ENCODE measurements at regions of chr2 and their contacts with region 1.

Region 1: DNA sequence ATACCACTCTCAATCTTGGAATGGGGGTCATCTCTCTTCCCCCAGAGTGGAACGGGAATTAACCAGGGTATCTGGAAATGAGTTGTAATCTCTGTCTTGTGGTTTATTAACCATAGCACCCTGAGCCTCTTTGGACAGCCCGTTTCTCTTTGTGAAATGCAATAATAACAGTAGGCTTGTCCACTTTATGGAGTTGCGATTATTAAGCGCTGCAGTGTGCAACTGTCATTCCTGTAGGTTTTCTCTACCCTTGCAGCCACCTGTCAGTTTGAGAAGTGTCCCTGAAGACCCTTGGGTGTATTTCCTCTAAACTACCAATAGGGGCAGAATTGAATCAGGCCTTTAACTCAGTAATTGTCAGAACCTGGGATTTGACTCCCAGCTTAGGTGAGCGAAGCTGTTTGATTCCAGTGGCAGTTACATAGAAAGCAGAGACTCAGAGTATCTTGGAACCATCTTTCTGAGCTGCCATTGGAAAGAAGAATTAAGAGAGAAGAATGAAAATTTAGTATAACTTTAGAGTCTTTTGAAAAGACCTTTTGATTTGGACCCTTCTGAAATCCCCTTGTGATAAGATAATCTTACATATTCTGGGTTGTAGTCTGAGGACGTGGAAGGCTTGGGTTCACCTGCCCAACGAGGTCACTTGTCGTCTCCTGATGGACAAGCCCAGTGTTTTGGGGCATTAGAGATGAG is 2.5 kb downstream of the HK2 start:
- DNase-seq: no peak
- H3K4me3 ChIP-seq: no peak overlapping the region
- CTCF ChIP-seq: no peak
- POLR2A ChIP-seq: no peak

Region 2: DNA sequence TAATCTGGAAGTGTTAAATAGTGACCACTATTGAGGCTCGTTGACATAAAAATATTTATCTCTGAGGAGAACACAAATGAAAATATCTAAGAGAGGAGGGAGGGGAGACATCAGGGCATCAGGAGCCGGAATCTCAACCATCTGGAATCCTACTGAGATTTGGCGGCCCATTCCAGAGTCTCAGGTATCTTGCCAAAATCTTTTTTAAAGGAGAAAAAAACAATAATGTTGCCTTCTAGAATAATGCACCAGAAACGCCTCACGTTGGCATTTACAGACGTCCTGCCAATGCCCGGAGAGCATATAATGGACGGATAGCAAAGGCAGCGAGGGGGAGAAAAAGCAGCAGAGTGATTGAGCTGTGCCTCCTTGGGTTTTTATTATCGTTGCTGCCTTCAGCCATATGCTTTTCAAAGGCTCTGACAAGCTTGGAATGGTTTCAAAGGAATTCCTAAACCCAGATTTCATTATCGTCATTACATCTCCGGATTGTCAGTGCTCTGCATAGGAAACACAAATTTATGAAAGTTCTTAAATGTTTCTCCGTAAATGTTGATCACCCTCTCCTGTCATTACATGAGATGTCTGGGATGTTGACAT is 1512.2 kb before region 1 on chr2:
- intact Hi-C with region 1: no loop called
- DNase-seq: no peak
- H3K4me3 ChIP-seq: no peak overlapping the region
- CTCF ChIP-seq: no peak
- POLR2A ChIP-seq: no peak

Region 3: DNA sequence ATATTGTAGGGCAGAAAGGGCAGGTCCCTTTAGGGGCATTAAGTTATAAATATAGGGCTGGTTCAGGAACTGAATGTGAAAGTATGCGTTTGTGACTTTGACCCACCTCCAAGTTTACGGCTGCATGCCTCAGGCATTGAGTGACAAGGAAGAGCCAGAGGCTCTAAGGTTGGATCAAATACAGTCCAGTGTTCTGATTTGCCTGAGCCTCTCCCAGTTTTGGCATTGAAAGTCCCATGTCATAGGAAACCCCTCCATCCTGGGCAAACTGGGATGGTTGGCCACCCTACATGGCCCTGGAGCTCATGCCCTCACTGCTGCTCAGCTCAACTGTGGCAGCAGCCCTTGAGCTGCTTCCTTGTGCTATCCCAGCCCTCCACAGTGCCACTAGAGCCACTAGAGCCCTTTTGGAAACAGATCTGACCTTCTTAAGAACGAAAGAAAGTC is 27.4 kb after region 1 on chr2:
- intact Hi-C with region 1: loop called (anchors 1 kb)
- DNase-seq: no peak
- H3K4me3 ChIP-seq: no peak overlapping the region
- CTCF ChIP-seq: no peak
- POLR2A ChIP-seq: no peak

Region 4: DNA sequence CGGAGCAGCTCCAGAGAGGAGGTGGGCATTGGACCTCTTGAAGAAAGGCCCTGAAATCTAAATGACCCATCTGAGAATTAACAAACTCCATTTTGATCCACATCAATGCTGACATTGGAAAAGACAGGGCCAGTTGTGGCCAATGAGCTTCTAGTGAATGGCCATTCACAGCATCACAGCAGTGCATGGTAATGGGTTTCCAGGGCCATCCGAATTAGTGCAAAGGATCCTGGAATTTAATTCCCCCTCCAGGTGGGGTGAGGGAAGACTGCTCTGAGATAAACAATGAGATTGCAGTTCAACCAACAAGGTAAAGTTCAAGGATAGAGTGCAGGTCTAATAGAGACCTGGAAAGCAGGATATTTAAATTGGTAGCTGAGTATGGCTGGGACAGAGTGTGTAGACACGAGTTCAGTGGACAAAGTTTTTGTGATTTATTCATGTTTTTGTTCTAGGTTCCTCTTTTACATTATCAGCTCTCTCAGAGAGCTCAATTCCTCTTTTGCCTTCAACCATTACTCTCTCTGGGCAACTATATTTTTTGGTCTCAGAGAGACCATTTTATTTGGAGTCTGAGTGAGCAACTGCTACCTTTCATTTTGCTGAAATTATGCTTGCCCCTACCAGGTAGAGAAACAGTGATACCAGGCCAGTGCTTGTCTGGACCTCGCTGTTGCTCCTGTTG is 357.9 kb after region 1 on chr2:
- intact Hi-C with region 1: no loop called
- DNase-seq: no peak
- H3K4me3 ChIP-seq: no peak overlapping the region
- CTCF ChIP-seq: no peak
- POLR2A ChIP-seq: no peak

Region 5: GRCh38 chr2:75211266-75211770 is 374.9 kb after region 1 on chr2:
- intact Hi-C with region 1: no loop called
- DNase-seq: no peak
- H3K4me3 ChIP-seq: no peak overlapping the region
- CTCF ChIP-seq: no peak
- POLR2A ChIP-seq: no peak

Measured in lower leg skin (tissue), 4 donors.